ENCODE measurements at regions of chr5 and their contacts with region 1.

Region 1: DNA sequence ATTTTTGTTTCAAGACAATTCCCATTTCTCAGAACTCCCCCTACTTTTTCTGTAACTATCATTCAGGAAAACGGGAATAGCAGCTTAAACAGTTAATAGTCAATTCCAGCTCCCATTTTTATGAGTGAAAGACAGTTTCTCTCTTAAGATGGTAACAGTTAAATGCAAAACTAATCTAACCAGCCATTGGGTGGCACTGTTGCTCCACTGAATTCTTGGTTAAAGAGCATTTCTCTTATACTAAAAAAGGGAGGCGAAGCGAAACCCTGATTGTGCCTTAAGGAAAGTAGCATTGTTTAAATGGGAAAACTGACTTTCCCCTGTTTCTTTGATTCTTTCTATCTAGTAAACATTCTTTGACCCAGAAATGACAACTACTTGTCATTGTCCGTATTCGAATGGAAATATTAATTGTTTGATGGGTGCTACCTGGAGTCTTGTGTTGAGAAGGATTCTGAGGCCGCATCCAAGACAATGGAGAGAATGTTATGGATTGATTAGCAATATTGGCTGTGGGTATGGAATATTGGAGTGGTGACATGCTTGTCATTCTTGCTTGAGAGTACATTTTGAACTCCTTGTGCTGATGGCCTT is 507.8 kb downstream of the MAT2B start:
- DNase-seq: no peak
- ATAC-seq: no peak

Region 2: GRCh38 chr5:163564321-163564938 is 448.7 kb before region 1 on chr5:
- intact Hi-C with region 1: loop called (anchors 5 kb)
- DNase-seq: no peak
- ATAC-seq: no peak

Region 3: DNA sequence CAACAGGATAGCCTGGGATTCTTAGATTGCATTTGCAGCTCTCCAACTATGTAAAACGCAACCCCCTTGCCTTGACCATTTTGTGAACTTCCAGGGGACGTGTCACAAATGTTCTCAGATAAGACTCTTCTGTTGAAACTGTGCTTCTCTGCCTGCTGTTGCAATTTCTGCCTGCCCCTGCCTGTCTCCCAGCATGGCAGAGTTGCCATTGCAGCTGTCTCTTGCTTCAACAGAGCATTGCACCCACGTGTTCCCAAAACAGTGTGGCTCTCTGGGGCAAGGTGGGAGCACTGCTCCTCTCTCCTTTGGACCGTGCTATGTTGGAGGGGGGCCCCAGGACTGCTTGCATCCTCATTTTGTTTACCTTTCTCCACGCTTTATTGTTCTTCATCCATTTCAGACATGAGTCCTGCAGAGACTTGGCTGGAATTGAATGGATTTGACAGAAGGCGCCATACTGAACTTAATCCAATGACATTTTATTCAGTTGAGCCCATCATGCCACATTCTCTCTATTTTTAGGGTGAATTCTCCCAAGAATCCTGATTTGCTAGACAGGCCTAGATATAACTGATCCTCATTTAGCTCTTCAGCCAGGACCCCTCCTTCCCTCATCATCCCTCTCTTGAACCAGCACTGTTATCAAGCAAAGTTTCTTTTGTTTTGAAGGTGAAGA is 417.1 kb before region 1 on chr5:
- intact Hi-C with region 1: no loop called
- DNase-seq: no peak
- ATAC-seq: no peak

Region 4: DNA sequence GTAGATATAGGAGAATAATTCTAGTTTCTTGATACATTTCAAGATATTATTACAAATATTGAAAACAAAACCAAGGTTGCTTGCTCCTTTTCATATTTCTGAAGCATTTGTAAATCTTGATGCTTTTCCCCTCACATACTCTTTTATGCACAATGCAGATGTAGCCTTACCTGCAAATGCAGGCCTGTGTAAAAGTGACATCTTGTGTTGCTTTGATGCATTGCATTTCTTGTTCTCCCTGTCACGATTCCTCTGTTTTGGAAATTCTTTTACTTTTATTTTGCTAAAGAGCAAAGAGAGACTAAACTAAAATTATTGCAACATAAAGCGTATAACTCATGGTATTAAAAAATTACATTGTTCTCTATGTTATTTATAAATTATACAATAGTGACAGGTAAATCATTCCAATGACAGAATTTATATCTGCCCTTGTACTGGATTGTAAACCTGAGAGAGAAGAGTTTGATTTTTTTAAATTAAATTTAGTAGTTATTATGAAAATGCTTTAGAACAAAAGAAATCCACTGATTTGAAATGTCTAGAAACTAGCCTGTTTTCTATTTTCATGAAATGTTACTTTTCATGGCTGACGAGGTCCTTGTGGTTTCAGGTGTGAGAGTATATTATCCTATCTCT is 462.3 kb after region 1 on chr5:
- intact Hi-C with region 1: loop called (anchors 2 kb)
- DNase-seq: no peak
- ATAC-seq: no peak

Region 5: GRCh38 chr5:164504141-164504772 is 491.1 kb after region 1 on chr5:
- intact Hi-C with region 1: loop called (anchors 2 kb)
- DNase-seq: no peak
- ATAC-seq: no peak

Region 6: DNA sequence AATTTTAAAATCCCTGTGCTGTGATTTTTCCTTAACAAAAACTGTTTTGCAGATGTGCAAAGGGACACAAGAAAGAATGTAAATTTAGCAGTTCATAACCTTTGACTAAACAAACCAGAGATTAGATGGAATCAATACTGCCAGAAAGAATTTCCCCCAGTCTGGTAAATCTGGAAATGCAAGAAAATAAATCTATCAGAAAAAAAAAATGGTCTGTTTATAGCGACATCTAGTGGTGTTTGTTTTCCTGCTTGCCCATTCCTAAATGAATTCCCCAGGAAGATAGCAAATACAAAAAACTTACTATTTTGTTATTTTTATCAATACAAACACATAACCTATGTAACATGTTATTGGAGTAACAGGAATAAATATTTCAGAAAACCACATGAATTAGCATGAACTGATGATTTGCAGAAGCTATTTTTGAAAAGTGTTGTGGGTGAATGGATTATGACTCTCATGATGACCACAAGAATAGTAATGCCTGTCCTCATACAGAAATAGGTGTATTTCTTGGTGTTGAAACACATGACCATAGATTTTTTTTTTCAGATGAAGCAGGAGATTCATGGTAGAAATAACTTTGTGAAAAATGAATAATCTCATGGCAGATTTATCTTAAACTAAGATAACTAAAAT is 1196.0 kb after region 1 on chr5:
- intact Hi-C with region 1: loop called (anchors 10 kb)
- DNase-seq: no peak
- ATAC-seq: no peak

Measured in Right ventricle myocardium inferior (tissue), 1 donor.